ENCODE measurements at regions of chr18 and their contacts with region 1.

Region 1: DNA sequence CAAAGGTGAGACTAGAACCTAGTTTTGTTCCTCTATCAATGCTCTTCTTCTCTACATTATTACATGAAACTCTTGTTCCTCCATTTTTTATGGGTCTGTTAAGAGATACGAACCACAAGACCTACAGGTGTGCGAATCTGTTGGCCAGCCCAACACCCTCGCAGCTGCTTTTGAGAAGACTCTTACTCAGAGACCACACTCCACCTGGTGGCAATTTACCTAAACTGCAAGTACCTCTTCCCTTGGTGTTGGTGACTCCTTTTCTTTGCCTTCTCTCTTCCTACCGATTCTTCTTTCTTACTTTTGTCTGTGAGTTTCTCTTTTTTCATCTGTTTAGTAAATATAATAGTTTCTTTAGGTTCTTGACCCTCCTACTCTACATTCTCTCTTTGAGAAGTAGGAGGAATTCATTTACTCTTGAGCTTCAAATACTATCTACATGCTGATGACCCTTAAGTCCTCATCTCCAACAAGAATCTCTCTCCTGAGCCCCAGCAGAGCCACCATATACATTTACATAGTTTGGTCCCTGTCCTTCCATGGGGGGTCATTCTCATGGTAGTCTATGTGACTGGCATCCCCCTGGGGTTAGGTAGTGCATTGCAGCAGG is 81.8 kb upstream of the GAREM1 start:
- DNase-seq: peak in 1 of 2 experiments; percentile 62
- H3K4me3 ChIP-seq: no peak overlapping the region
- H3K27ac ChIP-seq: no peak overlapping the region
- H3K4me1 ChIP-seq: peaks cover 0 to 10% (median 6%) of the 10 kb centered on the region in 4 experiments; a peak in 5 of 7 replicates
- H3K27me3 ChIP-seq: no peaks in the 10 kb centered on the region
- CTCF ChIP-seq: peak; percentile 38 to 85 (median 83)
- EP300 ChIP-seq: no peak
- POLR2A ChIP-seq: no peak
- RAD21 ChIP-seq: peak; percentile 86

Region 2: DNA sequence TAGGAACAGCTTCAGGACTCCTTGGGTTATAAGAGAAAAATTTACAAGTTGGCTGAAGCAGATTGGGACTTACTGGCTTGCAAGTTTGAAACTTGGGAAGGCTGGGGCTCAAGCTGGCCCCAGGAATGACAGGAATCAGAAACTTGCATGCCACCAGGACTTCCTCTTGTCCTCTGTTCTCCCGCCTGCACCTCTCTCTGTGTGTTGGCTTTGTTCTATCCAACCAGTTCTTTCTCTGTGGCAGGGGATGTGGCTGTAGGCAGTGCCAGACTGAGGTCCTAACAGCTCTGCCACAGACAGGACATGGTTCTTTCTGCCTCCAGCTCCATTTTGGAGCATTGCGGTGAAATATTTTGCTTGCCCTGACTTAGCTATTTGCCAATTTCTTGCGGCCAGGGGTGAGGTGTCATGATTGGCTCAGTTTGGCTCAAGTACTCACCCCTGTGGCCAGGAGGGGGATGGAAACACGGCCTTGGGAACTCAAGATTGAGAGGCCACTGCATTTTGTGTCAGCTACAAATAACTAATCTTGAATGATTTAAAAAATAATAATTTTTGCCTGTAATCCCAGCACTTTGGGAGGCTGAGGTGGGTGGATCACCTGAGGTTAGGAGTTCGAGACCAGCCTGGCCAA is 313.8 kb before region 1 on chr18:
- CTCF ChIA-PET with region 1: interaction called, 10 read pairs
- POLR2A ChIA-PET with region 1: no interaction called
- DNase-seq: no peak
- H3K4me3 ChIP-seq: no peak overlapping the region
- H3K27ac ChIP-seq: no peak overlapping the region
- H3K4me1 ChIP-seq: peaks cover 2 to 12% (median 4%) of the 10 kb centered on the region in 4 experiments; a peak in 3 of 7 replicates
- H3K27me3 ChIP-seq: no peaks in the 10 kb centered on the region
- CTCF ChIP-seq: peak; percentile 10 to 50 (median 43); a peak in 3 of 4 replicates
- EP300 ChIP-seq: no peak
- POLR2A ChIP-seq: no peak
- RAD21 ChIP-seq: peak; percentile 21 to 51; a peak in 3 of 4 replicates

Region 3: DNA sequence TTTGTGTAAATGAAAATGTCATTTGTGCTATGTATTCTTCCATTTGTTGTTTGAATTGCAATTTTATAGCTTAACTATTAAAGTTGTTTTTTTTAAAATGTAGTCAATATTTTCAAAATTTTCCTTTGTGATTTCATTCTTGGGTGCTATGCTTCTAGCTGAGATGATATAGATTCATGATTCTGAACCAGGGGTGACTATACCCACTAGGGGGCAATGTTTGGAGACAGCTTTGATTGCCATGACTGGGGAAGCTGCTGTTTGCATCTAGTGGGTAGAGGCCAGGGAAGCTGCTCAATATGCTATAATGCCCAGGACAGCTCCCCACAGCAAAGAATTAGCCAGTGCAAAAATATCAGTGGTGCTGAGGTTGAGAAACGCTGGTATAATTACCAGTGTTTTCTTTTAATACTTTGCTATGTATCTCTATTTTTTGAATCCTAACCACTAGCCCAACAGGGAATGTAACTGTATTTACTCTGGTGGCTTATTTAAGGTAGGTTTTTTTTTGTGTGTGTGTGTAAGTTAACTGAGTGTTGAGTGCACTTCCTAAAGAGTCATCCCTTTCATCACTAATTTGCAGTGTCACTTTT is 262.9 kb before region 1 on chr18:
- CTCF ChIA-PET with region 1: interaction called, 19 read pairs
- POLR2A ChIA-PET with region 1: no interaction called
- DNase-seq: peak in 1 of 2 experiments; percentile 68
- H3K4me3 ChIP-seq: no peak overlapping the region
- H3K27ac ChIP-seq: no peak overlapping the region
- H3K4me1 ChIP-seq: no peaks in the 10 kb centered on the region; a peak in 1 of 7 replicates
- H3K27me3 ChIP-seq: no peaks in the 10 kb centered on the region
- CTCF ChIP-seq: peak; percentile 31 to 75 (median 72)
- EP300 ChIP-seq: no peak
- POLR2A ChIP-seq: no peak
- RAD21 ChIP-seq: peak; percentile 66 to 79

Region 4: GRCh38 chr18:32470713-32471633 is 81.6 kb before region 1 on chr18 and contains the start of gene GAREM1:
- CTCF ChIA-PET with region 1: interaction called, 20 read pairs
- POLR2A ChIA-PET with region 1: no interaction called
- DNase-seq: peak; percentile 83 to 91
- H3K4me3 ChIP-seq: peak within 1 kb of the TSS; percentile 87 to 98 (median 90)
- H3K27ac ChIP-seq: peak within 1 kb of the TSS; percentile 70; the same call in 1 of the 2 replicates
- H3K4me1 ChIP-seq: peaks cover 3 to 12% (median 6%) of the 10 kb centered on the region in 4 experiments
- H3K27me3 ChIP-seq: peaks cover 0 to 14% (median 9%) of the 10 kb centered on the region in 4 experiments; a peak in 4 of 7 replicates
- CTCF ChIP-seq: peak; percentile 50 to 60 (median 55)
- EP300 ChIP-seq: no peak
- POLR2A ChIP-seq: peak; percentile 72 to 88
- RAD21 ChIP-seq: peak; percentile 48 to 71
- total RNA-seq, gene GAREM1: 9.2 and 9.6 TPM in 2 replicates

Region 5: DNA sequence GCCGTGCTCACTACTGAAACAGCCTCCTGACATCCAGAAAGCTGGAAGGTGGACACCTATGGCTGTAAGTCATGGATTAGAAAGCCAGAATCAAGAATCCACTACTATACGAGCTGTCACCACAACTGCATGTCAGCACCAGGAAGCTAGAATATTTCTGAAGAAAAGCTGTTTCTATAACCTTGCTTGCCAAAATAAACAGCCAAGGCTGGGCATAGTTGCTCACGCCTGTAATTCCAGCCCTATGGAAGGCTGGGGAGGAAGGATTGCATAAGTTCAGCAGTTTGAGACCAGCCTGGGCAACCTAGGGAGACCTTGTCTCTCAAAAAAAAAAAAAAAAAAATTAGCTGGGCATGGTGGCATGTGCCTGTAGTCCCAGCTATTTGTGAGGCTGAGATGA is 14.4 kb after region 1 on chr18:
- CTCF ChIA-PET with region 1: interaction called, 26 read pairs
- POLR2A ChIA-PET with region 1: no interaction called
- DNase-seq: no peak
- H3K4me3 ChIP-seq: no peak overlapping the region
- H3K27ac ChIP-seq: no peak overlapping the region
- H3K4me1 ChIP-seq: no peaks in the 10 kb centered on the region
- H3K27me3 ChIP-seq: no peaks in the 10 kb centered on the region
- CTCF ChIP-seq: no peak
- EP300 ChIP-seq: no peak
- POLR2A ChIP-seq: no peak
- RAD21 ChIP-seq: no peak